ENCODE measurements at regions of chr13 and their contacts with region 1.

Region 1: DNA sequence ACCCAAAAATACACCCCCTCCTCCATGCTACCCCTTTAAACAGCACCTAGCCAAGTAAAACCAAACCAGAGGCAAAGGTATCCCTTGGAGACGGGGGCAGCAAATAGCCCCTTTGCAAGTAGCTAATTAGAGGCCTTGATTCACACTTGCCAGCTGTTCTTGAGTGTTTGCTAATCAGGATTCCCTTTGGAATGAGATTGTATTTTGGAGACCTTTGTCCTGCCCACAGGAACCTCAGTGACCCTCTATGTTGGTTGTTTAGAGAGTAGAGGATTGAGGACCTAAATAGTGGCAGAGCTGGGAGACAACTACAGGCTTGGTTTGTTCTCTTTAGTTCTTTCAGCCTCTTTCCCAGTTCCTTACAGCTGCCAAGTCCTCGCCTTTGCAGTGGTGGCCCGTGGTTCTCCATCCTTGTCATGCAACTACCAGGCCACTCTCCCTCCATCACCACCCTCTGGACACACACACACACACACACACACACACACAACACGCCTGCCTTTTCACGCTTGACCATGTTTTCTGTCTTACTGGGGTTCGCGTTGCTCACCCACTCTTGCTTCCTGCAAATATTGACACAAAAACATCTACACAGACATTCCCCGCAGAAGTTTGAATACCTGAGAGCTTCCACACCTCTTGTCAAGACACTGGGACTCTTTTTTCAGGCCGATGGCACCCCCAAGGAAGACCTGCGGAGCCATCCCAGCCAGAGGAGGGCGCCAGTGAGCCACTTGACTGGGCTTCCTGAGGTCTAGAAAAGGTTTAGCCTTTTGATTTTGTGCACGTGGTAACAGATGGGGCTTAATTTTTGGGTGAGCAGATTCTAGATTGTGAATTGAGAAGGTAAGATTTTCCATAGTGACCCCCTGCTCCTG is 80.0 kb upstream of the GPR183 start:
- DNase-seq: peak; percentile 72
- H3K4me3 ChIP-seq: no peak overlapping the region
- H3K27ac ChIP-seq: no peak overlapping the region
- H3K4me1 ChIP-seq: peaks cover 3% of the 10 kb centered on the region
- CTCF ChIP-seq: peak; percentile 88

Region 2: GRCh38 chr13:99436686-99437416 is 49.7 kb after region 1 on chr13:
- CTCF ChIA-PET with region 1: interaction called, 4 read pairs
- POLR2A ChIA-PET with region 1: interaction called, 3 read pairs
- intact Hi-C with region 1: loop called (anchors 1 kb)
- DNase-seq: peak; percentile 82
- H3K4me3 ChIP-seq: no peak overlapping the region
- H3K27ac ChIP-seq: no peak overlapping the region
- H3K4me1 ChIP-seq: peaks cover 12% of the 10 kb centered on the region
- CTCF ChIP-seq: peak; percentile 97

Measured in OCI-LY7 (cell line).